Endothelial cell of umbilical vein (primary cell): ENCODE measurements at regions of chr5 and their contacts with region 1.

Region 1: GRCh38 chr5:73792687-73793320 is 166.8 kb downstream of the ARHGEF28 start:
- DNase-seq: peak; percentile 85
- H3K4me3 ChIP-seq: no peak overlapping the region
- H3K27ac ChIP-seq: no peak overlapping the region
- H3K4me1 ChIP-seq: peaks cover 54% of the 10 kb centered on the region
- H3K27me3 ChIP-seq: no peaks in the 10 kb centered on the region
- CTCF ChIP-seq: peak; percentile 85 to 95
- POLR2A ChIP-seq: no peak

Region 2: GRCh38 chr5:73519531-73520283 is 273.1 kb before region 1 on chr5:
- CTCF ChIA-PET with region 1: interaction called, 3 read pairs
- POLR2A ChIA-PET with region 1: no interaction called
- dilution Hi-C with region 1: no loop called
- intact Hi-C with region 1: loop called (anchors 5 kb)
- DNase-seq: peak; percentile 86
- H3K4me3 ChIP-seq: no peak overlapping the region
- H3K27ac ChIP-seq: no peak overlapping the region
- H3K4me1 ChIP-seq: no peaks in the 10 kb centered on the region
- H3K27me3 ChIP-seq: no peaks in the 10 kb centered on the region
- CTCF ChIP-seq: peak; percentile 78 to 82
- POLR2A ChIP-seq: no peak

Region 3: GRCh38 chr5:73638344-73639095 is 154.3 kb before region 1 on chr5:
- CTCF ChIA-PET with region 1: interaction called, 6 read pairs
- POLR2A ChIA-PET with region 1: no interaction called
- dilution Hi-C with region 1: no loop called
- intact Hi-C with region 1: loop called (anchors 2 kb)
- DNase-seq: peak; percentile 95
- H3K4me3 ChIP-seq: peak overlapping the region in 1 of 3 experiments; percentile 27
- H3K27ac ChIP-seq: peak overlapping the region; percentile 97
- H3K4me1 ChIP-seq: peaks cover 77% of the 10 kb centered on the region
- H3K27me3 ChIP-seq: no peaks in the 10 kb centered on the region
- CTCF ChIP-seq: no peak
- POLR2A ChIP-seq: peak; percentile 75

Region 4: GRCh38 chr5:73693481-73694061 is 99.2 kb before region 1 on chr5:
- CTCF ChIA-PET with region 1: interaction called, 19 read pairs
- POLR2A ChIA-PET with region 1: no interaction called
- dilution Hi-C with region 1: no loop called
- intact Hi-C with region 1: loop called (anchors 2 kb)
- DNase-seq: peak; percentile 80
- H3K4me3 ChIP-seq: no peak overlapping the region
- H3K27ac ChIP-seq: peak overlapping the region; percentile 20
- H3K4me1 ChIP-seq: peaks cover 67% of the 10 kb centered on the region
- H3K27me3 ChIP-seq: no peaks in the 10 kb centered on the region
- CTCF ChIP-seq: peak; percentile 52 to 62
- POLR2A ChIP-seq: no peak

Region 5: GRCh38 chr5:74648835-74649293 is 856.1 kb after region 1 on chr5:
- CTCF ChIA-PET with region 1: no interaction called
- POLR2A ChIA-PET with region 1: no interaction called
- dilution Hi-C with region 1: no loop called
- intact Hi-C with region 1: loop called (anchors 5 kb)
- DNase-seq: peak; percentile 69
- H3K4me3 ChIP-seq: no peak overlapping the region
- H3K27ac ChIP-seq: no peak overlapping the region
- H3K4me1 ChIP-seq: peaks cover 5% of the 10 kb centered on the region
- H3K27me3 ChIP-seq: no peaks in the 10 kb centered on the region
- CTCF ChIP-seq: peak; percentile 46 to 50
- POLR2A ChIP-seq: no peak